ENCODE measurements at regions of chr10 and their contacts with region 1.

Region 1: GRCh38 chr10:28334296-28334695 is 31.4 kb upstream of the MPP7 start:
- DNase-seq: no peak
- H3K4me3 ChIP-seq: peak overlapping the region; percentile 24 to 51 (median 48)
- H3K27ac ChIP-seq: peak overlapping the region; percentile 79 to 90 (median 86)
- H3K4me1 ChIP-seq: peaks cover 0 to 42% (median 33%) of the 10 kb centered on the region in 4 donors
- H3K27me3 ChIP-seq: no peaks in the 10 kb centered on the region
- CTCF ChIP-seq: no peak
- EP300 ChIP-seq: peak in 3 of 4 donors; percentile 63 to 91 (median 82)
- POLR2A ChIP-seq: no peak

Region 2: DNA sequence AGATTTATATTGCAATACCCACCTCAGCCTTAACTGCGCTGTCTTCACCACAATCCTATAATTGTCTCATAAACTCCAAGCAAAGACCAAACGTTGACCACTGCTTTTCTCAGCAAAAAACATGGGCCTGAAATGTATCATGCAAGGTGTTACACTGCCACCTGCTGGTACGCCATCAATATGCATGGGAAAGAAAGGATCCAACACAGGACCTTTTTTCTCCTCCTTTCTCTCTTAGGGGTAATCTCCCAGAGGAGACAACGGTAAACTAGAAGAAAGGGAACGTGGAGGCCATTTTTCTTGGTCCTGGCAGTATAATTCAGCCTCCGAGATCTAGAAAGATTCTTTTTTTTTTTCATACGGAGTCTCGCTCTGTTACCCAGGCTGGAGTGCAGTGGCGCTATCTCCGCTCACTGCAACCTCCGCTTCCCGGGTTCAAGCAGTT is 47.6 kb after region 1 on chr10:
- intact Hi-C with region 1: loop called (anchors 2 kb)
- DNase-seq: peak; percentile 92
- H3K4me3 ChIP-seq: no peak overlapping the region
- H3K27ac ChIP-seq: peak overlapping the region in 1 of 4 donors; percentile 1
- H3K4me1 ChIP-seq: peaks cover 0 to 4% (median 1%) of the 10 kb centered on the region in 4 donors
- H3K27me3 ChIP-seq: no peaks in the 10 kb centered on the region
- CTCF ChIP-seq: peak; percentile 92 to 98 (median 96)
- EP300 ChIP-seq: no peak
- POLR2A ChIP-seq: no peak

Region 3: GRCh38 chr10:28468707-28469483 is 134.6 kb after region 1 on chr10:
- intact Hi-C with region 1: no loop called
- DNase-seq: no peak
- H3K4me3 ChIP-seq: no peak overlapping the region
- H3K27ac ChIP-seq: no peak overlapping the region
- H3K4me1 ChIP-seq: no peaks in the 10 kb centered on the region
- H3K27me3 ChIP-seq: no peaks in the 10 kb centered on the region
- CTCF ChIP-seq: no peak
- EP300 ChIP-seq: no peak
- POLR2A ChIP-seq: no peak